ENCODE measurements at regions of chr14 and their contacts with region 1.

Region 1: DNA sequence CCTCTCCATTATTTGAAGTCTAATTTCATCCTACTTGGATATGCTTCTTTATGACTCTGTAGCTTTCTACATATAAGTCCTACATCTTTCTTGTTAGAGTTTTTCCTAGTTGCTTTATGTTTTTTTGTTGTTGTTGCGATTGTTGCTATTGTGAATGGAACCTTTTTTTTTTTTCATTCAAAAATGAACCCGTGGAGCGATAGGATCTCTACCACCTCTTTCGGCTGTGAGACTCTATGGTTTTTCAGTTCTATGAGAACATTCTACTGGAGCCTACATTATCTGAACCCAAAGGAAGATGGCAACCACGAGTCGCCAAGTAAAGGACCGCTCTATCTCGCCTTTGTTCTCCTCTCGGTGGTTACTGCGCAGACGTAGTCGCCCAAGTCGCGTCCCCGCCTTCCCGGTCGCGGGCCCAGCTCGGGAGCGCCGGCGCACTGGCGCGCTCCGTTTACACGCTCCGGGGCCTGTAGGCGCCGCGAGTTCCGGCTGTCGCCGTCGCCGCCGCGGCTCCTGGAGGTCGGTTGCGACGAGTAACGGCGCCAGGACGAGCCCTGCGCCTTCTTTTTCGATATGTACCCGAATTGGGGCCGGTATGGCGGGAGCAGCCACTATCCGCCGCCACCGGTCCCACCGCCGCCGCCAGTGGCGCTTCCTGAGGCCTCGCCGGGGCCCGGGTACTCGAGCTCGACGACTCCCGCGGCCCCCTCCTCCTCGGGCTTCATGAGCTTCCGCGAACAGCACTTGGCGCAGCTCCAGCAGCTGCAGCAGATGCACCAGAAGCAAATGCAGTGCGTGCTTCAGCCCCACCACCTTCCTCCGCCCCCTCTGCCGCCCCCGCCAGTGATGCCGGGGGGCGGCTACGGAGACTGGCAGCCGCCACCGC is at the start of gene YLPM1:
- DNase-seq: peak; percentile 98
- H3K4me3 Mint-ChIP-seq: peak within 1 kb of the TSS; percentile 100
- H3K27ac Mint-ChIP-seq: peak within 1 kb of the TSS; percentile 98
- H3K4me1 Mint-ChIP-seq: peaks cover 41% of the 10 kb centered on the region
- H3K27me3 Mint-ChIP-seq: no peaks in the 10 kb centered on the region
- total RNA-seq, gene YLPM1: 63.7 and 66.7 TPM in 2 replicates

Region 2: DNA sequence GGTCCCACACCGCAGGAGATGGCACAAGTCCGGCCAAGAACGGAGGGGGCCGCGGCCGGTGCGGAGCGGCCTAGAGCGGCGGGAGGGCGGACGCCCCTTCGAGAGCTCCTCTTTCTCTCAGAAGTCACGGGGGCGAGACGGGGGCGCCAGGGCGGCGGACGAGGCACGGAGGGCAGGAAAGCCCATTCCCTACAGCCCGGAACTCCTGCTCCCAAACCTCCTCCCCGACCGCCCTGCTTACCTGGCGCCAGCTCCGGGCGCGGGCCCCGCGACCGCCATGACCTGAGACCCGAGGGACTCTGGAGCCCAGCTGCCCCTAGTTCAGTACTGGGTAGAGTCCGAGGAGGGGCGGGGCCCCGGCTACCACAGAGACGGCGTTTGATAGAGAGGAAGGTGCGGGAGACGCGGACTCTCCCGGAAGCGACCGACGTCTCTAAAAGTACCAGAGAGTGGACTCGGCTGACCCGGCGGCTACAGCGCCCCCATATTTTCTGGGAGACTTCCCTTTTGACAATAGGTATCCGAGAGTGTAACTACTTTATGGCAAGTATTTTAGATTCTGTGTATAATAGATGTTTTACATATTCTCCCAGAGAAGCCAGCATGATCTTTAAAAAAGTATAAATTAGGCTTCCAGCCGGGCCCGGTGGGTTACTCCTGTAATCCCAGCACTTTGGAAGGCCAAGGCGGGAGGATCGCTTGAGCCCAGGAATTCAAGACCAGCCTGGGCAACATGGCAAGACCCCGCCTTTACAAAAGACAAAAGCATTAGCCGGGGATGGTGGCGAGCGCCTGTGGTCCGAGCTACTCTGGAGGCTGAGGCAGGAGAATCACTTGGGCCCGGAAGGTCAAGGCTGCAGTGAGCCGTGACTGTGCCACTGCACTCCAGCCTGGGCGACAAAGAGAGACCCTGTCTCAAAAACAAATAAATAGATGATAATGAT is 460.3 kb before region 1 on chr14 and contains the start of gene ABCD4:
- intact Hi-C with region 1: loop called (anchors 5 kb)
- DNase-seq: peak; percentile 96
- H3K4me3 Mint-ChIP-seq: peak within 1 kb of the TSS; percentile 99
- H3K27ac Mint-ChIP-seq: peak within 1 kb of the TSS; percentile 95
- H3K4me1 Mint-ChIP-seq: peaks cover 21% of the 10 kb centered on the region
- H3K27me3 Mint-ChIP-seq: no peaks in the 10 kb centered on the region
- total RNA-seq, gene ABCD4: 42.4 and 42.9 TPM in 2 replicates

Region 3: DNA sequence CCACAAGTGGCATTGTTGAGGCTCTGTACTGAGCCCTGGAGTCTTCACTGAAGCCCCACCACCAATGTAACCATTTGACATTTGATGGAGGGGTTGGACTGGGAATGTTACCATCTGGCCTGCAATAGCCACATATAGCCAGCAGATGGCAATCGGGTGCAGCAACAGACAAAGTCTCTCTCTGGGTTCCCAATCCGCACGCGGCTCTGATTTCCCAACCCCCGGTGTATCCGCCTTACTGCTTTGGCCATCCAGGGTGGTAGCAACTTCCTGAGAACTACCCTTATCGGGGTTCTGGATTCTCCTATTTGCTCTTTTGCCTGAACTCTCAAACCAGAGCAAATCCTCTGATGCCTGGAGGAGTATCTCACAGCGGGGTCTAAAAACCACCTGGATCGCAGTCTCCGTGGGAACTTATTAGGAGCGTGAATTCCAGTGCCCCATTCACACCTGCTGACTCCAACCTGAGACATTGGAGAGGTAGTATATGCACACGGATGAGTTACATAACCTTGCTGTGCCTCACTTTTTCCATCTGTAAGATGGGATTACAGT is 400.7 kb before region 1 on chr14:
- intact Hi-C with region 1: no loop called
- DNase-seq: peak; percentile 89
- H3K4me3 Mint-ChIP-seq: no peak overlapping the region
- H3K27ac Mint-ChIP-seq: no peak overlapping the region
- H3K4me1 Mint-ChIP-seq: no peaks in the 10 kb centered on the region
- H3K27me3 Mint-ChIP-seq: peaks cover 11% of the 10 kb centered on the region

Region 4: GRCh38 chr14:74612350-74613021 is 150.7 kb before region 1 on chr14:
- intact Hi-C with region 1: loop called (anchors 2 kb)
- DNase-seq: peak; percentile 96
- H3K4me3 Mint-ChIP-seq: peak overlapping the region; percentile 79
- H3K27ac Mint-ChIP-seq: no peak overlapping the region
- H3K4me1 Mint-ChIP-seq: peaks cover 27% of the 10 kb centered on the region
- H3K27me3 Mint-ChIP-seq: peaks cover 45% of the 10 kb centered on the region

Region 5: GRCh38 chr14:74712499-74713394 is 50.4 kb before region 1 on chr14 and contains the starts of genes AREL1 and FCF1:
- intact Hi-C with region 1: loop called (anchors 1 kb)
- DNase-seq: peak; percentile 96
- H3K4me3 Mint-ChIP-seq: peak within 1 kb of the TSS; percentile 92
- H3K27ac Mint-ChIP-seq: peak within 1 kb of the TSS; percentile 89
- H3K4me1 Mint-ChIP-seq: peaks cover 36% of the 10 kb centered on the region
- H3K27me3 Mint-ChIP-seq: no peaks in the 10 kb centered on the region
- total RNA-seq, gene AREL1: 43.5 and 45.5 TPM in 2 replicates
- total RNA-seq, gene FCF1: 64.5 and 68.6 TPM in 2 replicates

Region 6: DNA sequence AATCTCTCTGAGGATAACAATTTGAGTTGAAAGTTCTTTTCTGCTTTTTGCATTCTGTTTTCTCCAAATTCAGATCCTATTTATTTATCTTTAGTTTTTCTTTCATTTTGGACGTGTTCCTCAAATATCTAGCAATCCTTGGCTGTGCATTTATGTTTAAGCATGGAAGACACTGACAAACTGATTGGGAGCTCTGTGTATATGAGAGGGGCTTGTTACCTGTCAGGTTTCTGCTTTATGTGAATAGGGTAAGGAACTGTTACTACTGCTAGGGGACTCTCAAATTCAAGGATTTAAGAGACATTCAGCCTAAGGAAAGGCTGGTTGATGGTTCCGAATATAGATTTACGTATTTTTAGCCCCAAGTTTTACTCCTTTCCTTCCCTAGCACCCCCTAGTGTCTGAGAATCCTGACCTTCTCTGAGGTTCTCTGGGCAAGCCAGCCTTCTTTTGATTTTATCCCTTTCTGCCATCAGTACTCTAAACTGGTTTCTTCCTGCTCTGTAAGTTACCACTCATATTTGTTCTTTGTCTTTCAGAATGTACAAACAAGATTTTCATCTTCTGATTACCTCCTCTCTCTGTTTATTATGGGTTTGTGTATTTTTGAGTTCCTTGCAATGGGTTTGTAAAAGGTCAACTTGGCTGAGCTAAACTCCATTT is 30.5 kb after region 1 on chr14:
- intact Hi-C with region 1: loop called (anchors 2 kb)
- DNase-seq: peak; percentile 75
- H3K4me3 Mint-ChIP-seq: peak overlapping the region; percentile 80
- H3K27ac Mint-ChIP-seq: peak overlapping the region; percentile 84
- H3K4me1 Mint-ChIP-seq: peaks cover 39% of the 10 kb centered on the region
- H3K27me3 Mint-ChIP-seq: no peaks in the 10 kb centered on the region

Region 7: DNA sequence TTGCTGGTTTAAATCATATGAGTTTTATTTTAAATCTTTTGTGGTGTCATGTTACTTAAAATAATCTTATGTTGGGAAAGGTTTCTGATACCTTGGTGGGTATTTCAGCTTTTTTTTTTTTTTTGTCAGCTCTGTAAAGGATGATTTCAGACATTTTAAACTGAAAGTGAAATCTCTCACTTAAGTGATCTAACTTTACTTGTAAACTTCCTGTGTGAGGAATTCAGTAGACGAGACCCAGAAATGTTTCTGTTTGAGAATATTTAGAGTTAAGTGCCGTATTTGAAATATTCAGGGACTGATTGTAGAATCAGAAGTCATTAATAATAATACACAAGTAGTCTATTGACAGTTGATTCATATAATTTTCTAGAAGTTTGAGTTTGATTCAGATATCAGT is 75.0 kb after region 1 on chr14:
- intact Hi-C with region 1: loop called (anchors 2 kb)
- DNase-seq: no peak
- H3K4me3 Mint-ChIP-seq: peak overlapping the region; percentile 74
- H3K27ac Mint-ChIP-seq: peak overlapping the region; percentile 89
- H3K4me1 Mint-ChIP-seq: peaks cover 61% of the 10 kb centered on the region
- H3K27me3 Mint-ChIP-seq: no peaks in the 10 kb centered on the region

Measured in activated CD4-positive, alpha-beta T cell treated with anti-CD3 and anti-CD28 coated beads, Interleukin-2, amount 10 ng/mL, durations not matched to agents 24 days and 14 days (primary cell).